ENCODE measurements at regions of chr1 and their contacts with region 1.

Region 1: DNA sequence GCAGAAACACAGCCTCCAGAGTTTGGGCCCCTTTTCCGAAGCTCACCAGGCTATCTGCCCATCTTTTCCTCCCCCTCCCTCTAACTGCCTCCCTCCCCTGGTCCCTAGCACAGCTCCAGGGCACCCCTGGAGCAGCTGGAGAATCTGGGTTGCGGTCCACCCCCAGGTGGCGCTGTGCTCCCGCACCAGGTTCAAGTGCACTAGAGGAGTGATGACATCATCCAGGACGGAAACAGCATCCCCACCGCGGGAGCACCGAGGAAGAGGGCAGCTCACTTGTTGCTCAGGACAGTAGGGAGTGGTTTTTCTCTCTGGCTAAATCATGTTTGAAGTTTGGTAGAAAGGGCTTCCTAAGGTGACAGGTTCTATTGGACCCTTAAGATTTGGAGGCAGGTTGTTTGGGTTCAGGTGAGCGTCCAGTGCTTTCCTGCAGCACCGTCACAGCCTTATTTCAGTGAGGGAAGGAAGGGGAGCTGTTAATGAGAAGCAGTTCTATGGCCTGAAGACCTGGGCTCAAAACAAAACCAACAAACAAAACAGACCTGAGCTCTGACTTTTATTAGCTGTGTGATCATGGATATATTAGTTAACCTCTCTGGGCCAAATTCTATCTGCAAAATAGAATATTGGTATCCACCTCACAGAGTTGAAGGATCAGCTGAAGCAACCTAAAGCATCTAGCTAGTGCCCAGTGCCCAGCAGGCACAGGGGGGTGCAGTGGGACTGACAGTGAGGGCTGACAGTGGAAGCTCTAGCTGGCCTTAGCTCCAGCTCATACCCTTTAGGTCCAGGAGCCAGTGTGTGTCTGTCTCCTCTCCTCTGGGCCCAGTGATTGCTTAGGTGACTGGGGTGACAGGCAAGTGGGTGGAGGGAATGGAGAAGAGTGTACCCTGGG is 7.5 kb downstream of the SHISA4 start:
- DNase-seq: peak; percentile 82
- H3K4me3 ChIP-seq: no peak overlapping the region
- H3K27ac ChIP-seq: peak overlapping the region; percentile 65
- H3K27me3 ChIP-seq: no peaks in the 10 kb centered on the region
- CTCF ChIP-seq: peak; percentile 98

Region 2: DNA sequence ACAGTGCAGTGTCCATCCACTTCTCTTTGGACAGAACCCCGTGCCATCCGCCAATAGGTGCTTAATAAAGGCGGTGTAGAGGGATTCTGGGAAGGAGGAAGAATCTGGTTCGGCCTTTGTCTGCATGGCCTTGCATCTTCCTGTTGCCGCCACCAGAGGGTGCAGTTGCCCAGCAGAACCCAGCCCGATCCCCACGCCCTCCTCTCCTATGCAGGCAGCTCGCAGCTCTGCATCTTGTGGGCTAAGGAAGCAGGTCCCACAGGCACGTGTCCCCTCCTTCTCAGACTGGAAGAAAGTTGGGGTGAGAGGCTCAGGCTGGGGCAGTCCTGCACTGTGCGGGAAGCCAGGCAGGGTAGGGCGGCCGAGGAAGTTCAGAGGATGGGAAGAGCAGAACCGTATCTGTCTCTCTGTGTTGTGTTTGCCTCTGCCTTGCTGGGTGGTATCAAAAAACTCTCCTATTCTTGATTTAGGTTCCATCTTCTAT is 336.4 kb before region 1 on chr1:
- CTCF ChIA-PET with region 1: no interaction called
- POLR2A ChIA-PET with region 1: no interaction called
- DNase-seq: peak; percentile 74
- H3K4me3 ChIP-seq: no peak overlapping the region
- H3K27ac ChIP-seq: no peak overlapping the region
- H3K27me3 ChIP-seq: no peaks in the 10 kb centered on the region
- CTCF ChIP-seq: peak; percentile 96

Region 3: DNA sequence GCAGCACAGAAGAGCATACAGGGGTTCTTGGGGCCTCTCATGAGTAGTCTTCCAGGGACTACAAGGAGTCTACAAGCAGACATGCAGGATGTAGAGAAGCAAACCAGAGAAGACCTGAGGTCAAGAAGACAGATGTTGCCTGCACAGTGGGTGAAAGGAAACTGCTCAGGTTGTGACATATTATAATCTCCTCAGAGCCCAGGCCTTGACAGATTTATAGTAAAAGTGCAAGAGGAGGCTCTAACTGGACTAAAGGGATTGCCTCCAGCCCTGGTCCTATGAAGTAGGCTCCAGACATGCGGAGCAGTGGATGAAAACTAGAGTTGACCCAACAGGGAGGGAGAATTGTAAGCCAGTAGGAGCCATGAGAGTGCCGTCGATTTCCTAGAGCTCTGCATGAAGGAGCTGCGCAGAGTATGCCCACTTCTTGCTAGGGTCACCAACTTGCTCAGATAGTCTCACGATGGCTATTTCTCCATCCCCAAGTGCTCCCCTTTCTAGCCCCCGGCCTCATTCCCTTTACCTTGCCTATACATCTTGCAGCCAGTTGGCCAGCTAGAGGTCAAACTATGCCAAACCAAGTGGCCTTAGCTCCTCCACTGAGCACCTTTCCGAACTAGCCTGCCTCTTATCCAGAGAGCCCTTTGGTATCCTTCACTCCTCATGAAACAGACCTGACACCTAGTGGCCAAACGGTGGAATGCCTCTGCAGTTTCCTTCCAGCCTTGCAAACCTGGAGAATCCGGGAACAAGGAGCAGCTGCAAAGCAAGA is 103.4 kb before region 1 on chr1:
- CTCF ChIA-PET with region 1: no interaction called
- POLR2A ChIA-PET with region 1: no interaction called
- DNase-seq: peak; percentile 65
- H3K4me3 ChIP-seq: no peak overlapping the region
- H3K27ac ChIP-seq: no peak overlapping the region
- H3K27me3 ChIP-seq: no peaks in the 10 kb centered on the region
- CTCF ChIP-seq: peak; percentile 99

Region 4: GRCh38 chr1:201877877-201878401 is 18.2 kb before region 1 on chr1:
- CTCF ChIA-PET with region 1: interaction called, 33 read pairs
- POLR2A ChIA-PET with region 1: interaction called, 12 read pairs
- DNase-seq: no peak
- H3K4me3 ChIP-seq: no peak overlapping the region
- H3K27ac ChIP-seq: no peak overlapping the region
- H3K27me3 ChIP-seq: no peaks in the 10 kb centered on the region
- CTCF ChIP-seq: peak; percentile 74

Region 5: GRCh38 chr1:201916649-201917249 is 20.6 kb after region 1 on chr1:
- CTCF ChIA-PET with region 1: interaction called, 14 read pairs
- POLR2A ChIA-PET with region 1: interaction called, 10 read pairs
- DNase-seq: peak; percentile 79
- H3K4me3 ChIP-seq: no peak overlapping the region
- H3K27ac ChIP-seq: peak overlapping the region; percentile 93
- H3K27me3 ChIP-seq: no peaks in the 10 kb centered on the region
- CTCF ChIP-seq: no peak

Region 6: DNA sequence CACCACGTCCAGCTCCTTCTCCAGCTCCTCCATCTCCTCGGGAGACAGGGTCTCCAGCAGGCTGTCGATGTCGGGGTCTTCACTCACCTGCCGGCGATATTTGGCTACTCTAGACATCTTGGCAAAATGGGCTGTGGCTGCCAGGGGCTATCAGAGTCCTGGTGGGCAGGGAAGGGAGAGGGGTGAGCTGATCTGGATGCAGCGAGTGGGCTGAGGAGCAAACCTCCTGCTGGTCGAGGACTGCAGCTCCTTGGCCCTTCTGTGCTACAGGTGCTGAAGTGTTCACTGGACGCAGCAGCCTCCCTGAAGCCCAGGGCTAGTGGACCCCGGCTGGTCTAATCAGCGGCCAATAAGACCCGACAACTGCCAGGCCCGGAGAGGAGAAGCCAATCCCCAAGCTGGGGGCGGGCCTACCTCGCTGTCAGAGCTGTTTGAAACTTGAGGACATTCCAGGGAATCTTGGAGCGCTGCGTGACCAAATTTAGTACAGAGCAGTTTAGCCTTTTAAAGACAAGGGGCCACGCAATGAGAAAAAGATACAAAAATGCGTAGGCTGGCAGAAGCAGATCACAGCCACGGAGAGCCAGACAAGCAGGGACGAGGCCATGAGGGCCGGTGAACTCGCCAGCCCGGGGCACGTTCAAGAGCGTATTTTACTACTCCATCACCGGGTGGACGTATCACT is 50.2 kb after region 1 on chr1 and contains the start of gene LMOD1:
- CTCF ChIA-PET with region 1: interaction called, 90 read pairs
- POLR2A ChIA-PET with region 1: interaction called, 18 read pairs
- DNase-seq: peak; percentile 95
- H3K4me3 ChIP-seq: peak within 1 kb of the TSS; percentile 98
- H3K27ac ChIP-seq: peak within 1 kb of the TSS; percentile 99
- H3K27me3 ChIP-seq: no peaks in the 10 kb centered on the region
- CTCF ChIP-seq: peak; percentile 26; the same call in 1 of the 2 replicates
- polyA plus RNA-seq, gene LMOD1: 41.1 and 52.6 TPM in 2 replicates

Region 7: DNA sequence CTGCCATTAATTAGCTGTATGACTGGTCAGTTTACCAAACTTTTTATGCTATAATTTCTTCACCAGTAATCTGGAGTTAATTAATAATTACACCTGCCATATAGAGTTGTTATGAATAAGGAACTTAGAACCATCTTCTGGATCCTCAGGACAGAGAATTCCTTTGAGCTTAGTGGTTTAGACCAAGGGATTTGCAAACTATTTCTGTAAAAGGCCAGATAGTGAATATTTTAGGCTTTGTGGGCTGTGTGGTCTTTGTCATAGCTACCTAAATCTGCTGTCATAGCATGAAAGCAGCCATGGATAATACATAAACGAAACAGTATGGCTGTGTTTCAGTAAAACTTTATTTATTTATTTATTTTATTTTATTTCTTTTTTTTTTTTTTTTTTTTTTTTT is 68.1 kb after region 1 on chr1:
- CTCF ChIA-PET with region 1: interaction called, 72 read pairs
- POLR2A ChIA-PET with region 1: interaction called, 13 read pairs
- DNase-seq: peak; percentile 39
- H3K4me3 ChIP-seq: no peak overlapping the region
- H3K27ac ChIP-seq: no peak overlapping the region
- H3K27me3 ChIP-seq: no peaks in the 10 kb centered on the region
- CTCF ChIP-seq: no peak

Region 8: DNA sequence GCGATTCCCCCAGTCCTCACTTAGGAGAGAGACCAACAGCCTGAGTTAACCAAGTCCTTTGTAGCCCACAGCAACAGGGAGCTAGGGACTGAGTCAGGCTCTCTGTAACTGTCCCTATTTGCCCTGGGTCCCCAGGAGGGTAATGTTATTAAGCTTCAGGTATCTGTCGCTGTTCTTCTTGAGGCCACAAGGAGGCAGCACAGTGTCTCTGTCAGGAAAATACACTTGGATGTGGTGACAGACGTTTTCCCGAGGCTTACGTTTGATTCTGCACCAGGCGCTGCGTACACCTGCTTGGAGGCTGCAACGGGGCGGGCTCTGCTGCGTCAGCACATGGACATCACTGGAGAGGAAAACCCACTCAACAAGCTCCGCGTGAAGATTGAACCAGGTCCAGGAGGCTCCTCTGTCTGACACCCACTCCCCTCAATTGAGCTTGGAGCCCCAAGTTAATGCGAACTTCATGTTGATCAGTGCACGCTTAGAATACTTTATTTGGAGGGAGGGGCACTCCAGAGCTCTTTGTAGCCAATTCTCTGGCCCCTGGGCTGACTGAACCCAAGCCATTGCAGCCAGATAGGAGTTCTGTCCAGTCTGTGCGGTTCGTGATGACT is 103.6 kb after region 1 on chr1:
- CTCF ChIA-PET with region 1: interaction called, 16 read pairs
- POLR2A ChIA-PET with region 1: no interaction called
- DNase-seq: no peak
- H3K4me3 ChIP-seq: no peak overlapping the region
- H3K27ac ChIP-seq: no peak overlapping the region
- H3K27me3 ChIP-seq: no peaks in the 10 kb centered on the region
- CTCF ChIP-seq: peak; percentile 77

Region 9: GRCh38 chr1:202227053-202227672 is 331.0 kb after region 1 on chr1:
- CTCF ChIA-PET with region 1: no interaction called
- POLR2A ChIA-PET with region 1: no interaction called
- DNase-seq: no peak
- H3K4me3 ChIP-seq: no peak overlapping the region
- H3K27ac ChIP-seq: no peak overlapping the region
- H3K27me3 ChIP-seq: peaks cover 49% of the 10 kb centered on the region
- CTCF ChIP-seq: no peak

Region 10: DNA sequence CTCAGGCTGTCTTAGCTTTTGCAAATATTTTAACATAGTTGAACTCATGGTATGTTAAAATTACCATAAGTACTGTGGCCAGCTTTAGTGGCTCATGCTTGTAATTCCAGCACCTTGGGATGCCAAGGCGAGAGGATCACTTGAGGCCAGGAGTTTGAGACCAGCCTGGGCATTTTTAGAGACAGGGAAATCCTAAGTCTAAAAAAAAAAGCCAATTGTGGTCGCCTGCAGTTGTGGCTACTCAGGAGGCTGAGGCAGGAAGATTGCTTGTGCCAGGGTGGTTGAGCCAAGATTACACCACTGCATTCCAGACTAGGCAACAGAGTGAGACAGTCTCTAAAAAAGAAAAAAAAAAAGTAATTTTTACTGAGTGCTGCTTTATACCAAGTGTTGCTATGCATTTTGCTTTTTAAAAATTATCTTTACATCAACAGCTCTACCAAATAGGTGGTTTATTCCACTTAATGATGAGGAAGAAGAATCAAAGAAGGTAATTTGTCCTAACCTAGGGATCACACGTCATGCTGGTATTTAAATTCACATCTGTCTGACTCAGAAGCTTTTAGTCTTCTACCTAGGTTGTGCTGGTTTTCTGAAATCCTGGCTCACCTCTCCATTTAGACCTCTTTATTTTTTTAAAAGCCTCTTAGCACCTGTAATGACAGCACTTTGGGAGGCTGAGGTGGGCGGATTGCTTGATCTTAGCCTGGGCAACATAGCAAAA is 469.1 kb after region 1 on chr1:
- CTCF ChIA-PET with region 1: no interaction called
- POLR2A ChIA-PET with region 1: no interaction called
- DNase-seq: no peak
- H3K4me3 ChIP-seq: no peak overlapping the region
- H3K27ac ChIP-seq: no peak overlapping the region
- H3K27me3 ChIP-seq: no peaks in the 10 kb centered on the region
- CTCF ChIP-seq: no peak

Measured in AG04450 (cell line).